ENCODE measurements at regions of chr11 and their contacts with region 1.

Region 1: GRCh38 chr11:113213549-113213948 is 100.8 kb upstream of the TTC12 start:
- DNase-seq: no peak
- H3K4me3 ChIP-seq: no peak overlapping the region
- H3K4me3 Mint-ChIP-seq: no peak overlapping the region
- H3K27ac Mint-ChIP-seq: no peak overlapping the region
- H3K4me1 ChIP-seq: no peaks in the 10 kb centered on the region
- H3K4me1 Mint-ChIP-seq: no peaks in the 10 kb centered on the region
- H3K27me3 ChIP-seq: no peaks in the 10 kb centered on the region; the same call in 1 of the 2 replicates
- H3K27me3 Mint-ChIP-seq: peaks cover 26% of the 10 kb centered on the region
- CTCF ChIP-seq: no peak

Region 2: GRCh38 chr11:113065330-113065729 is 148.2 kb before region 1 on chr11:
- CTCF ChIA-PET with region 1: no interaction called
- POLR2A ChIA-PET with region 1: no interaction called
- intact Hi-C with region 1: no loop called
- DNase-seq: no peak
- H3K4me3 ChIP-seq: no peak overlapping the region
- H3K4me3 Mint-ChIP-seq: no peak overlapping the region
- H3K27ac Mint-ChIP-seq: no peak overlapping the region
- H3K4me1 ChIP-seq: no peaks in the 10 kb centered on the region
- H3K4me1 Mint-ChIP-seq: no peaks in the 10 kb centered on the region
- H3K27me3 ChIP-seq: peaks cover 1% of the 10 kb centered on the region; the same call in 1 of the 2 replicates
- H3K27me3 Mint-ChIP-seq: peaks cover 18% of the 10 kb centered on the region
- CTCF ChIP-seq: no peak

Region 3: GRCh38 chr11:113167595-113167994 is 46.0 kb before region 1 on chr11:
- CTCF ChIA-PET with region 1: no interaction called
- POLR2A ChIA-PET with region 1: no interaction called
- intact Hi-C with region 1: no loop called
- DNase-seq: no peak
- H3K4me3 ChIP-seq: no peak overlapping the region
- H3K4me3 Mint-ChIP-seq: no peak overlapping the region
- H3K27ac Mint-ChIP-seq: no peak overlapping the region
- H3K4me1 ChIP-seq: no peaks in the 10 kb centered on the region
- H3K4me1 Mint-ChIP-seq: no peaks in the 10 kb centered on the region
- H3K27me3 ChIP-seq: no peaks in the 10 kb centered on the region
- H3K27me3 Mint-ChIP-seq: peaks cover 36% of the 10 kb centered on the region
- CTCF ChIP-seq: no peak

Region 4: GRCh38 chr11:113197443-113197842 is 16.1 kb before region 1 on chr11:
- CTCF ChIA-PET with region 1: no interaction called
- POLR2A ChIA-PET with region 1: no interaction called
- intact Hi-C with region 1: loop called (anchors 1 kb)
- DNase-seq: no peak
- H3K4me3 ChIP-seq: no peak overlapping the region
- H3K4me3 Mint-ChIP-seq: no peak overlapping the region
- H3K27ac Mint-ChIP-seq: no peak overlapping the region
- H3K4me1 ChIP-seq: peaks cover 7% of the 10 kb centered on the region
- H3K4me1 Mint-ChIP-seq: peaks cover 14% of the 10 kb centered on the region
- H3K27me3 ChIP-seq: no peaks in the 10 kb centered on the region
- H3K27me3 Mint-ChIP-seq: peaks cover 16% of the 10 kb centered on the region
- CTCF ChIP-seq: no peak

Region 5: GRCh38 chr11:113417428-113417827 is 203.9 kb after region 1 on chr11:
- CTCF ChIA-PET with region 1: no interaction called
- POLR2A ChIA-PET with region 1: no interaction called
- intact Hi-C with region 1: no loop called
- DNase-seq: no peak
- H3K4me3 ChIP-seq: no peak overlapping the region
- H3K4me3 Mint-ChIP-seq: no peak overlapping the region
- H3K27ac Mint-ChIP-seq: no peak overlapping the region
- H3K4me1 ChIP-seq: no peaks in the 10 kb centered on the region
- H3K4me1 Mint-ChIP-seq: no peaks in the 10 kb centered on the region
- H3K27me3 ChIP-seq: no peaks in the 10 kb centered on the region
- H3K27me3 Mint-ChIP-seq: no peaks in the 10 kb centered on the region
- CTCF ChIP-seq: no peak

Measured in Caco-2 (cell line).